AG04449 (cell line): ENCODE measurements at regions of chr12 and their contacts with region 1.

Region 1: GRCh38 chr12:118404876-118405521 is 28.6 kb downstream of the SUDS3 start:
- DNase-seq: peak; percentile 23
- H3K4me3 ChIP-seq: no peak overlapping the region
- CTCF ChIP-seq: peak; percentile 58

Region 2: GRCh38 chr12:118418385-118419057 is 13.5 kb after region 1 on chr12:
- CTCF ChIA-PET with region 1: interaction called, 24 read pairs
- POLR2A ChIA-PET with region 1: no interaction called
- DNase-seq: no peak
- H3K4me3 ChIP-seq: no peak overlapping the region
- CTCF ChIP-seq: no peak

Region 3: GRCh38 chr12:118432812-118433545 is 28.0 kb after region 1 on chr12:
- CTCF ChIA-PET with region 1: interaction called, 16 read pairs
- POLR2A ChIA-PET with region 1: no interaction called
- DNase-seq: no peak
- H3K4me3 ChIP-seq: no peak overlapping the region
- CTCF ChIP-seq: no peak

Region 4: GRCh38 chr12:119544765-119545625 is 1140.0 kb after region 1 on chr12:
- CTCF ChIA-PET with region 1: interaction called, 53 read pairs
- POLR2A ChIA-PET with region 1: no interaction called
- DNase-seq: peak; percentile 28
- H3K4me3 ChIP-seq: no peak overlapping the region
- CTCF ChIP-seq: peak; percentile 71